Activated CD4-positive, alpha-beta memory T cell treated with anti-CD3 and anti-CD28 coated beads for 36 hours (primary cell): ENCODE measurements at regions of chr19 and their contacts with region 1.

Region 1: DNA sequence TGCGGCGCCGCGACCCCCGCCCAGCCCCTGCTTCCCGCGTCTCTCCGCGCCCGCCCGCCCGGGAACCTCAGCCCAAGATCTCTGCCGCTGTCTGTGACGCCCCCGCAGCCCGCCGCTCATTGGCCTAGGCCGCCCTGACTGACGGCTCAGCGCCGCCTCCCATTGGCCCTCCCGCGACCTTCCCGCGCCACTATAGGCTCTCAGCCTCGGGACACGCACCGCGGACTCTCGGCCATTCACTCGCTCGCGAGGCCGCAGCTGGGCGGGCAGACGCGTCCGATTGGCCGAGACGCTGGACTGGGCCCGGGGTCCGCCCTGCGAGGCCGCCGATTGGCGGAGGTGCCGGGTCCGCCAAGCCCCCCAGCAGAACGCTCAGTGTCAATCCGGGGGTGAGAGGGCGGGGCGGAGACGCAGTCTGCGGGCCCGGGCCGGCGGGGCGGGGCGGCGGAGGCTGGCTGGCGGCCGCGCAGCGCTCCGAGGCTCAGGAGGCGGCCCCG is at the start of gene PRKACA:
- DNase-seq: peak; percentile 99
- H3K4me3 Mint-ChIP-seq: peak within 1 kb of the TSS; percentile 81
- H3K27ac Mint-ChIP-seq: peak within 1 kb of the TSS; percentile 76
- H3K4me1 Mint-ChIP-seq: peaks cover 37% of the 10 kb centered on the region
- H3K27me3 Mint-ChIP-seq: no peaks in the 10 kb centered on the region
- total RNA-seq, gene PRKACA: 64.3 to 65.6 TPM

Region 2: DNA sequence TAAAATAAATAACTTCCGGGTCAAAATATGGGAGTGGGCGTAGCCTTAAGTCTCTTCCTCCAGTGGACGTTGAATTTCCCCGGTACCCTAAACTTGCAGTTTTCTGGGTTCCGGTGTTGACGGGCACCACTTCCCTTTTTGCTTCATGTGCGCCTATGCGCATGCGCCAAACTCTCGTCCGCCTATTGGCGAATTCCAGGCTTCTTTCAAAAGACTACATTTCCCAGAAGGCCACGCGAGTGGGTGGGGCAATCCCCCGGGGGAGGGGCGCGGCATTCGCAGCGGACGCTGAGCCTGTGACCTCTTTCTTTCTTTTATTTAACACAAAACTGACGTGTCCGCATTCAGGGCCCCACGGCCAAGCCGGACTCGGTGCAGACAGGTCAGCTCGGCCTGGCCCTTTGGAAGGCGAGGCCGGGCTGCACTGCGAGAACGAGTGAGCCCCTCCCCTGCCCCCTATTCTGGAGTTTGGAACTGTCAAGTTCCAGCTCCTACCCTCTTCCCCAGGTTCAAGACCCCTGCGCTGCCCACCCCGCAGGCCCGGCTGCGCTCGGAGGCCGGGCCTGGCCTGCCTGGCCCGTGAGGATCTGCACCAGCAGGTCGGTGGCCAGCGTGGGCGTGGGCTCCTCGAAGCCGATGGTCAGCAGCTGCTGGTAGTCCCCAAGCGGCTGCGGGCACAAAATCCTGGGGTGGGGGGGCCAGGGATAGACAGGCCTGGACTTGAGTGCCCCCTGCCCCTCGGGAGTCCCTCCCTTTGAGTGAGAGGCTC is 36.2 kb before region 1 on chr19:
- CTCF ChIA-PET with region 1: interaction called, 9 read pairs
- POLR2A ChIA-PET with region 1: interaction called, 3 read pairs
- intact Hi-C with region 1: loop called (anchors 5 kb)
- DNase-seq: peak; percentile 99
- H3K4me3 Mint-ChIP-seq: peak overlapping the region; percentile 84
- H3K27ac Mint-ChIP-seq: peak overlapping the region; percentile 87
- H3K4me1 Mint-ChIP-seq: peaks cover 17% of the 10 kb centered on the region
- H3K27me3 Mint-ChIP-seq: peaks cover 2% of the 10 kb centered on the region

Region 3: GRCh38 chr19:14091081-14091812 is 26.5 kb before region 1 on chr19:
- CTCF ChIA-PET with region 1: interaction called, 4 read pairs
- POLR2A ChIA-PET with region 1: no interaction called
- intact Hi-C with region 1: loop called (anchors 1 kb)
- DNase-seq: peak; percentile 83
- H3K4me3 Mint-ChIP-seq: peak overlapping the region; percentile 89
- H3K27ac Mint-ChIP-seq: peak overlapping the region; percentile 95
- H3K4me1 Mint-ChIP-seq: peaks cover 22% of the 10 kb centered on the region
- H3K27me3 Mint-ChIP-seq: no peaks in the 10 kb centered on the region